ENCODE measurements at regions of chr6 and their contacts with region 1.

Region 1: GRCh38 chr6:20534295-20535262 is at the start of gene CDKAL1:
- DNase-seq: peak; percentile 93
- ATAC-seq: peak; percentile 81
- H3K4me3 ChIP-seq: peak within 1 kb of the TSS; percentile 89
- H3K27ac ChIP-seq: peak within 1 kb of the TSS; percentile 48
- H3K4me1 ChIP-seq: peaks cover 13% of the 10 kb centered on the region
- H3K27me3 ChIP-seq: no peaks in the 10 kb centered on the region
- CTCF ChIP-seq: no peak
- total RNA-seq, gene CDKAL1: 13.8 and 14.9 TPM in 2 replicates

Region 2: DNA sequence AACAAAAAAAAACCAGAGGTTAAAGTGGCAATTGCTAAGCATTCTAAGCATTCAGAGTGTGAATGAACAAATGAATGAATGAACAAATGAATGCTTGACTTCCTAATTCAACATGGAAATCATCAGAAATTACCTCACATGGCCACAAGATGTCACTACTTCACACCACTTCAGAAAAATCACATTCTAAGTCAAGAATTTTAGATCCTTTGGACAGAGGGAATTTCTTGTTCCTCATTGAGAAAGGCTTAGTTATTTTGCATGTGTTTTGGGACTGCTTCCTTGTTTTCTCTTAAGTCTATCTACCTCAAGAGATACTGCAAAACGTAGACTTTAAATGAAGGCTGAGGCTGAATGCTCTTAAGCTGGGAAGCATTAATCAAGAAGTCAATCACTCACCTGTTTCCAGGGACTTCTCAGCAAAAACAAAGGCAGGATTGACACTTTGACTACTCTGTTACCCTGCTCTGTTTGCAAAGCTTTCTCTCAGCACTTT is 442.5 kb before region 1 on chr6:
- CTCF ChIA-PET with region 1: no interaction called
- POLR2A ChIA-PET with region 1: no interaction called
- intact Hi-C with region 1: loop called (anchors 2 kb)
- DNase-seq: peak; percentile 73
- ATAC-seq: no peak
- H3K4me3 ChIP-seq: no peak overlapping the region
- H3K27ac ChIP-seq: no peak overlapping the region
- H3K4me1 ChIP-seq: no peaks in the 10 kb centered on the region
- H3K27me3 ChIP-seq: no peaks in the 10 kb centered on the region
- CTCF ChIP-seq: peak; percentile 69

Region 3: GRCh38 chr6:20212392-20213217 is 322.0 kb before region 1 on chr6 and contains the start of gene MBOAT1:
- CTCF ChIA-PET with region 1: no interaction called
- POLR2A ChIA-PET with region 1: no interaction called
- intact Hi-C with region 1: loop called (anchors 10 kb)
- DNase-seq: peak; percentile 93
- ATAC-seq: peak; percentile 94
- H3K4me3 ChIP-seq: peak within 1 kb of the TSS; percentile 73
- H3K27ac ChIP-seq: peak within 1 kb of the TSS; percentile 74
- H3K4me1 ChIP-seq: peaks cover 20% of the 10 kb centered on the region
- H3K27me3 ChIP-seq: no peaks in the 10 kb centered on the region
- CTCF ChIP-seq: no peak
- total RNA-seq, gene MBOAT1: 8.4 and 10.3 TPM in 2 replicates

Region 4: GRCh38 chr6:20291764-20292580 is 242.6 kb before region 1 on chr6:
- CTCF ChIA-PET with region 1: interaction called, 4 read pairs
- POLR2A ChIA-PET with region 1: no interaction called
- intact Hi-C with region 1: loop called (anchors 1 kb)
- DNase-seq: peak; percentile 93
- ATAC-seq: peak; percentile 92
- H3K4me3 ChIP-seq: no peak overlapping the region
- H3K27ac ChIP-seq: no peak overlapping the region
- H3K4me1 ChIP-seq: peaks cover 5% of the 10 kb centered on the region
- H3K27me3 ChIP-seq: 0 out of 2 replicates have a peak, but pooled peaks cover 3% of the 10 kb centered on the region
- CTCF ChIP-seq: peak; percentile 94

Region 5: DNA sequence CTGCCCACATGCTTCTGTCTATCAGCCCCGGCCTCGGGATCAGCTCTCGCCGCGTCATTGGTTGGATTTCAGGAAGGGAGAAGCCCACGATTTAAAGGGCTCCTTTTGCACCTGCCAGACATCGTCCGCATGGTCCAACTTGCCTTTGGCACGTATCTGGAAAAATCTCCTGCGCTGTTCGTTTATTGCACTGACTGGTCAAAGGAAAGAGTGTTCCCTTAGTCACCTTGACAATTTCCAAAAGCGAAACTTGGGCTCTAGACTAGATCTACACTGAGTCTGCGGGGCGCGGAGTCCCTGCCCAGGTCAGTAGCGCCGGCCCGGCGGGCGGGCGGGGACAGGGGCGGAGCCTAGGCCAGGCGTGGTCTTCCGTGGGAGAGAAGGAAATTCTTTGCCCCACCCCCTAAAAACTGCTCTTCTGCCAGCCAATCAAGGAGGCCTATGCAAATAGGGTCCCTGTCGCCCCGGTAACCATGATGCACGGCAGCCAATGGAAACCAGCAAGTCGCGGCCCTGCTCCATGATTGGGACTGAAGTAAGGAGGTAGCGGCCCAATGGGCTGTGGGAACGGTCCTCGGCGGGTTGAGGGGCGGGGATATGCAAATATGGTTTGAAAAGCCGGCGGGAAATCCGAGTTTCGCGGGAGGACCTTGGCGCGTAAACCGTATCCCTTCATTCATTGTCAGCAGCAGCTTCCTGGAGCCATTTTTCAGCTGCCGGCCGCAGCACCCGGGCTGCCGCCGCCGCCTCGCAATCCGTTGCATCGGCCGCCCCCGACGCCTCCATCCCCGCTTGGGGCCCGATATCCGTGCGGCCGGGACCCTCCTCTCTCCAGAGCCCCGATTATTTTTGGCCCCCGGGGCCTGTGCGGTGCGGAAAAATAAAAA is 133.1 kb before region 1 on chr6 and contains the start of gene E2F3:
- CTCF ChIA-PET with region 1: interaction called, 5 read pairs
- POLR2A ChIA-PET with region 1: no interaction called
- intact Hi-C with region 1: loop called (anchors 1 kb)
- DNase-seq: peak; percentile 99
- ATAC-seq: peak; percentile 81
- H3K4me3 ChIP-seq: peak within 1 kb of the TSS; percentile 90
- H3K27ac ChIP-seq: peak within 1 kb of the TSS; percentile 96
- H3K4me1 ChIP-seq: peaks cover 15% of the 10 kb centered on the region
- H3K27me3 ChIP-seq: peaks cover 3% of the 10 kb centered on the region; the same call in 1 of the 2 replicates
- CTCF ChIP-seq: no peak
- total RNA-seq, gene E2F3: 8.8 and 10.8 TPM in 2 replicates

Region 6: GRCh38 chr6:20511852-20512251 is 22.7 kb before region 1 on chr6:
- CTCF ChIA-PET with region 1: interaction called, 10 read pairs
- POLR2A ChIA-PET with region 1: no interaction called
- intact Hi-C with region 1: no loop called
- DNase-seq: no peak
- ATAC-seq: no peak
- H3K4me3 ChIP-seq: no peak overlapping the region
- H3K27ac ChIP-seq: no peak overlapping the region
- H3K4me1 ChIP-seq: peaks cover 14% of the 10 kb centered on the region
- H3K27me3 ChIP-seq: no peaks in the 10 kb centered on the region
- CTCF ChIP-seq: no peak

Region 7: DNA sequence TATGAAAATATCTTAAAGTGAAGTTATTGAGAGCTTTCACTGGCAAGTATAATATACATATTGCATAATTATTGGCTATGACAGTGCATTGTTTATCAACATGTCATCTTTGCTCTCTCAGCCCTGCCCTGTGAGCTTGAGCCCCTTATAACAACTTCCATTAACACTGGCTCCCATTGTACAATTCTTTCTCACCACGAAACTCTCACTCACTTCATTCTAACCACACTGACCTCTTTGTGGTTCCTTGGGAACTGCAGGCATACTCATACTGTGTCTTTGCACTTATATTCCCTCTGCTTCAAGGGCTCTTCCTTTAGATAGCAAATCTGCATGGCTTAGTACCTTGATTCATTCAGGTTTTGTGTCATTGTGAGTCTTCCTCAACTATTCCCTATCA is 411.4 kb after region 1 on chr6:
- CTCF ChIA-PET with region 1: interaction called, 11 read pairs
- POLR2A ChIA-PET with region 1: no interaction called
- intact Hi-C with region 1: no loop called
- DNase-seq: peak; percentile 58
- ATAC-seq: peak; percentile 43; the same call in 1 of the 2 replicates
- H3K4me3 ChIP-seq: no peak overlapping the region
- H3K27ac ChIP-seq: no peak overlapping the region
- H3K4me1 ChIP-seq: no peaks in the 10 kb centered on the region
- H3K27me3 ChIP-seq: no peaks in the 10 kb centered on the region
- CTCF ChIP-seq: peak; percentile 43